GM10248 (cell line): ENCODE measurements at regions of chr2 and their contacts with region 1.

Region 1: GRCh38 chr2:118882709-118883210 is 35.3 kb upstream of the EN1 start:
- DNase-seq: peak; percentile 62
- CTCF ChIP-seq: peak; percentile 92

Region 2: DNA sequence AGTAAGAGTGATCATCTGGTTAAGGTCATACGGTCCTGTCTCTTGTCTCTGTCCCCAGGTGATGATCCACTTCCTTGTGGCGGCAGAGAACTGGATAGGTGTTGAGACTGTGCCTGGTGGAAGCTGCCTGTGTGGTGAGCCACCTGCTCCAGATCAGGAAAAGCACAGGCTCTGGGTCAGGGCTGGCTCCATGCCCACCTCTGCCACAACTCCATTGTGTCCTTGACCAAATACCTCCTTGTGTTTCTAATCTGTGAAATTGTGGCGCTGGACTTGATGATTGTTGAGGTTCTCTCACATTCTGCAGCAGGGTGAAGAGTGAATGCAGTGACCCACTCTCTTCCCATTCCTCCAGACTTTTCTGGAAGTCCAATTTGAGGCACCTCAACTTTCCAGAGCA is 10.3 kb after region 1 on chr2:
- CTCF ChIA-PET with region 1: interaction called, 40 read pairs
- POLR2A ChIA-PET with region 1: no interaction called
- DNase-seq: no peak
- CTCF ChIP-seq: no peak

Region 3: GRCh38 chr2:119126650-119127049 is 243.9 kb after region 1 on chr2:
- CTCF ChIA-PET with region 1: interaction called, 29 read pairs
- POLR2A ChIA-PET with region 1: no interaction called
- DNase-seq: peak; percentile 62
- CTCF ChIP-seq: peak; percentile 53

Region 4: DNA sequence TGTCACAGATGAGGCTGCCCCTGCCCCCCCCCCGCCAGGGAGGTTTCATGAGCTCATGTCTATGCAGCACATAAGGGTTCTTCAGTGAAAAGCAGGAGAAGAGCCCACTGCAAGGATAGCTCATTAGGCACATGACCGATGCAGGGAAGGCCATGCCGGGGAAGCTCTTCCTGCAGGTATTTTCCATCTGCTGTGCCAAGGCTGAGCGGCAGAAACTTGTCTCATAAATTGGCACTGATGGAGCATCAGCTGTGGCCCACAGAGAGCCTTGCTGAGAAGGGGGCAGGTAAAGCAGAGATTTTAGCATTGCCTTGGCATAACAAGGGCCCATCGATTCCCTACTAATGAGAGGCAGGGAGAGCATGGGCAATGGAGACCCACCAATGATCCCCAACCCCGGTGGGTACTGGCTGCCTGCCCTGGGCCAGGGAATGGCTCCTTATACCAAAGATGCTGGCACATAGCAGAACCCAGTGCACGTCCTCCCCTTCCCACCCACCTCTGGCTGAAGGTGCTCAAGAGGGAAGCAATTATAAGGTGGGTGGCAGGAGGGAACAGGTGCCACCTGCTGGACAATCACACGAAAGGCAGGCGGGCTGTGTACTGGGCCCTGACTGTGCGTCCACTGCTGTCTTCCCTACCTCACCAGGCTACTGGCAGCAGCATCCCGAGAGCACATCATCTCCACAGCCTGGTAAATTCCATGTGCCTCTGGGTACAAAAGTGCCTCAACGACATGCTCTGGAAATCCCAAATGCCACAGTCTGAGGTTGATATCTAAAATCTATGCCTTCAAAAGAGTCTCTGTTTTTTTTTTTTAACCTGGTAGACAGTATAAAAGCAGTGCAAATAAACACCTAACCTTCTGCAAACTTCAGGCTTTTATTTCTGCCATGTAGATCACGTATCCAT is 382.3 kb after region 1 on chr2:
- CTCF ChIA-PET with region 1: interaction called, 19 read pairs
- POLR2A ChIA-PET with region 1: no interaction called
- DNase-seq: peak; percentile 81
- CTCF ChIP-seq: peak; percentile 91

Region 5: GRCh38 chr2:119311356-119311755 is 428.6 kb after region 1 on chr2:
- CTCF ChIA-PET with region 1: interaction called, 14 read pairs
- POLR2A ChIA-PET with region 1: no interaction called
- DNase-seq: no peak
- CTCF ChIP-seq: no peak